Activated T-helper 1 cell treated with anti-CD3 and anti-CD28 coated beads, Interleukin-12 subunit alpha, Interleukin-12 subunit beta, Interleukin-2, Interleukin-4 antibody, amounts not matched to agents 30 ng/mL and 10 ng/mL and 1 ng/mL, durations not matched to agents 14 hours and 24 hours and 36 hours (primary cell): ENCODE measurements at regions of chr6 and their contacts with region 1.

Region 1: GRCh38 chr6:141906569-141907080 is 226.1 kb upstream of the GJE1 start:
- DNase-seq: no peak
- H3K4me3 Mint-ChIP-seq: no peak overlapping the region
- H3K27ac Mint-ChIP-seq: no peak overlapping the region
- H3K4me1 Mint-ChIP-seq: no peaks in the 10 kb centered on the region
- H3K27me3 Mint-ChIP-seq: no peaks in the 10 kb centered on the region

Region 2: GRCh38 chr6:141335477-141336273 is 571.0 kb before region 1 on chr6:
- intact Hi-C with region 1: no loop called
- DNase-seq: no peak
- H3K4me3 Mint-ChIP-seq: no peak overlapping the region
- H3K27ac Mint-ChIP-seq: no peak overlapping the region
- H3K4me1 Mint-ChIP-seq: no peaks in the 10 kb centered on the region
- H3K27me3 Mint-ChIP-seq: peaks cover 5% of the 10 kb centered on the region

Region 3: DNA sequence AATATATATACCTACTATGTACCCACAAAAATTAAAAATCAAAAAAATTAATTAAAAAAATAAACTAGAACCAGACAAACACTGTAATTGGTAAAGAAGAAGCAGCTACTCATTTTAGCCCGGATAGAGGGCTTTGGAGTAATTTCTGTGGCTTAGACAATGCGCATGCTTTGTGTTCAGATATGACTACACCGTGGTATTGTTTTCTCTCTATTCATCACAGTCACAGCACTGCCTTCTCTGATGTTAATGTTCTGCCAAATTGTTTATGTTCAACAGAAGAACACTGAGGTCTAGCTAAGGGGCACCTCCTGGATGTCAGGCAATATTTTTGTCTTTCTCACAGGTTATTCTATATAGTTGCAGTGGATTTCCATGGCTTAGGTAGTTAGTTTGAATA is 148.6 kb after region 1 on chr6:
- intact Hi-C with region 1: loop called (anchors 10 kb)
- DNase-seq: no peak
- H3K4me3 Mint-ChIP-seq: no peak overlapping the region
- H3K27ac Mint-ChIP-seq: no peak overlapping the region
- H3K4me1 Mint-ChIP-seq: no peaks in the 10 kb centered on the region
- H3K27me3 Mint-ChIP-seq: peaks cover 4% of the 10 kb centered on the region

Region 4: GRCh38 chr6:142118925-142119324 is 212.3 kb after region 1 on chr6:
- intact Hi-C with region 1: no loop called
- DNase-seq: no peak
- H3K4me3 Mint-ChIP-seq: no peak overlapping the region
- H3K27ac Mint-ChIP-seq: no peak overlapping the region
- H3K4me1 Mint-ChIP-seq: no peaks in the 10 kb centered on the region
- H3K27me3 Mint-ChIP-seq: peaks cover 1% of the 10 kb centered on the region